CD4-positive, alpha-beta memory T cell (primary cell): ENCODE measurements at regions of chr1 and their contacts with region 1.

Region 1: DNA sequence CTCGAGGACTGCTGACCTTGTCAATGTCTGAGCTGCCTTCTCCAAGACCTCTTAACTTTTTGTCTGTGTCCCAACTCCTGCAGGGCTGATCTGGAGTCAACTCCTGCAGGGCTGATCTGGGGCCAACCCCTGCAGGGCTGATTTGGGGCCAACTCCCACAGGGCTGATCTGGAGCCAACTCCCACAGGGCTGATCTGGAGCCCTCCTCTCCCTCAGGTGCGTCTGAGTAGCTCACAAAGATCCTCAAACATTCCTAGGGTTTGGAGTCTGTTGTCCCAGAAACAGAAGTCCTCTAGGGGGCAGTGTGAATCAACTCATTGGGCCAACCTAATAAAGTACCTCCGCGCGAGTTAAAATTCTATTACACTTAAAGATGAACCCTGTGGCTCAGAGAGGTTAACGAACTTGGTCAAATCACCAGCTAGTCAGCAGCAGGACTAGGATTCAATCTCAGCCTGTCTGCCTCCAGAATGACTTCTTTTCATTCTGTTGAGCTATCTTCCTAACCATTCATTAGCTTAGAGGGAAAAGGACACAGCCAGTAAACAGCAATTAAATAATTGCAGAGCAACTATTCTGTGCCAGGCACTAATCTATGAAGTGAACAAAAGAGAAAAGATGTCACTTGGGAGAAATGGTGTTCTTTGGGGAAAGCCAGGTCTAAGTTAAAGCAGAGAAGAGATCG is 17.2 kb upstream of the RLF start:
- DNase-seq: peak; percentile 60 to 65 (median 65)
- H3K4me3 ChIP-seq: no peak overlapping the region
- H3K4me3 Mint-ChIP-seq: no peak overlapping the region
- H3K27ac ChIP-seq: no peak overlapping the region
- H3K27ac Mint-ChIP-seq: peak overlapping the region in 1 of 7 donors; percentile 12
- H3K4me1 ChIP-seq: no peaks in the 10 kb centered on the region
- H3K4me1 Mint-ChIP-seq: peaks cover 0 to 7% (median 3%) of the 10 kb centered on the region in 4 donors
- H3K27me3 ChIP-seq: no peaks in the 10 kb centered on the region
- H3K27me3 Mint-ChIP-seq: peaks cover 13 to 30% of the 10 kb centered on the region in 2 donors

Region 2: GRCh38 chr1:40067023-40067422 is 77.0 kb before region 1 on chr1:
- CTCF ChIA-PET with region 1: no interaction called
- POLR2A ChIA-PET with region 1: no interaction called
- intact Hi-C with region 1: no loop called
- DNase-seq: no peak
- H3K4me3 ChIP-seq: no peak overlapping the region
- H3K4me3 Mint-ChIP-seq: no peak overlapping the region
- H3K27ac ChIP-seq: no peak overlapping the region
- H3K27ac Mint-ChIP-seq: peak overlapping the region; percentile 10 to 95 (median 84)
- H3K4me1 ChIP-seq: peaks cover 24% of the 10 kb centered on the region
- H3K4me1 Mint-ChIP-seq: peaks cover 32 to 42% (median 36%) of the 10 kb centered on the region in 4 donors
- H3K27me3 ChIP-seq: no peaks in the 10 kb centered on the region
- H3K27me3 Mint-ChIP-seq: no peaks in the 10 kb centered on the region

Region 3: DNA sequence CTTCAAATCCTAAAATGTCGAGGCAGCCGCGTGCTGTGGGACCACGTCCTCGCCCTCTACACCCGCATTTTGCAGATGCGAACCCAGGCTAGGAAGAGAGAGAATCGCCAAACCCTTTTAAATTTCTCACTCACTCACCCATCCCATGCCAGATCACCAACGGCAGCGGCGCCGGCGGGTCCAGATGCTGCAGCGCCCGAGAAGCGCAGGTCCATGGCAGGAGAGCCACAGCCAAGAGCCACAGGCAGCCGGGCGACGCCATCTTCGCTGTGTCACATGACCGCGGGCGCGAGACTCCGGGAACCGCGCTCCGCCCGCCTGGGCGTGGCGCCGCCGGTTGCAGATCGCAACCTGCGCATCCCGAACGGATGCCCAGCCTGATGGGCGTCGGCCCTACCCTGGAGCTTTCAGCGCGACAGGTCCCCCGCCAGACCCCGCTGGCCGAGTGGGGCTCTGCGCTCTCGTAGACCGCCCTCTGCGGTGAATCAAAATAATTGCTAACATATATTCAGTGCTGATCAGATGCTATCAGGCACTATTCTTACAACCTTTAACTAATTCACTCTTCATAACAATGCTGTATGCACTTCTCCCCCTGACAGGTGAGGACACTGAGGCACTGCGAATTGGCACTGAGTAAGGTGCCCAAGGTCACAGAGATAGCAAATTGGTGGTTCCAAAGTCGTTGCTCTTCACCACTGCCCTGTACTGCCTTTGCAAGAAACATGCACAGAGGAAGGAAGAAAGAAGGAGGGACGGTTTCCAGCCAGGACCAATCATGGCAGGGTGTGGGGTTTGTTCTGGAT is 46.9 kb before region 1 on chr1 and contains the start of gene PPT1:
- CTCF ChIA-PET with region 1: interaction called, 3 read pairs
- POLR2A ChIA-PET with region 1: no interaction called
- intact Hi-C with region 1: loop called (anchors 10 kb)
- DNase-seq: peak; percentile 73 to 82 (median 79)
- H3K4me3 ChIP-seq: peak within 1 kb of the TSS; percentile 81 to 91
- H3K4me3 Mint-ChIP-seq: peak within 1 kb of the TSS; percentile 90 to 99 (median 96)
- H3K27ac ChIP-seq: peak within 1 kb of the TSS; percentile 47
- H3K27ac Mint-ChIP-seq: peak within 1 kb of the TSS; percentile 83 to 98 (median 97)
- H3K4me1 ChIP-seq: peaks cover 19% of the 10 kb centered on the region
- H3K4me1 Mint-ChIP-seq: peaks cover 33 to 40% (median 35%) of the 10 kb centered on the region in 4 donors
- H3K27me3 ChIP-seq: no peaks in the 10 kb centered on the region
- H3K27me3 Mint-ChIP-seq: peaks cover 0 to 7% of the 10 kb centered on the region in 2 donors
- total RNA-seq, gene PPT1: 56.7 to 64.8 TPM

Region 4: DNA sequence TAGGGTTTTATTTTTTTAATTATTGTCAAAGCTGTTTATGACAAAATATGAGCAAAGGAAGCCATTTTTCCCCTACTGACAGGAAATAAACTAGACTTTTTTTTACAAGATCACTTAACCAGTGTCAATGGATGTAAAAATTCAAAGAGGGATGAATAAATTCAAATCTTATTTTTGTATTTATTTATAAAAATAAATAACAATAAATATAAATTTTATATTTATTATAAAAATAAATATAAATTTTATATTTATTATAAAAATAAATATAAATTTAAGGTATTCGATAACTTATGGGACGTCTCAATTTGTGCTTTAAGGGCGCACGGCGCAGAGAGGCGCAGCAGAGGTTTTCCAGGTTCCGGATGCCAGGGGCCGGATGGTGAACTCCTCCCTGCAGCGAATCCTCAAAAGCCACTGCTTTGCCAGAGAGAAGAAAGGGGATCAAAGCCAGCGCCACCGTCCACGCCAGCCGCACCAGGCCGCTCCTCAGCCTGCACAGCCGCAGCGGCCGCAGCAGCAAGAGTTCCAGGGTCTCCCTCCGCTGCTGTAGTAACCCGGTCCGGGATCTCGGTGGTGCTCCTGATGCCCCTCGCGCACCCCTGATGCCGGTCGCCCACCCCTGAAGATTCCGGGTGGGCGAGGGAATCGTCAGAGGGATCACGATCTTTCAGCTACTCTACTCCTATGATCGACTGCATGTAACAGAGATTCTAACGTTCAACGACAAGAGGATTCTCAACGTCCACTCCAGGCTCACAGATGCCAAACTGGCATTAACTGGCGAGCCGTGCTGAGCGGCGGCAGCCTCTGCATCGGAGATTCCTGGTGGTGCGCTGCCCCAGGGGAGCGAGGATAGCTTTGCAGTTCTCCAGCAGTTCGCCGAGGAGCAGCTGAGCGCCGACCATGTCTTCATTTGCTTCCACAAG is 11.4 kb before region 1 on chr1:
- CTCF ChIA-PET with region 1: interaction called, 10 read pairs
- POLR2A ChIA-PET with region 1: no interaction called
- intact Hi-C with region 1: no loop called
- DNase-seq: peak in 1 of 5 donors; percentile 7
- H3K4me3 ChIP-seq: no peak overlapping the region
- H3K4me3 Mint-ChIP-seq: no peak overlapping the region
- H3K27ac ChIP-seq: no peak overlapping the region
- H3K27ac Mint-ChIP-seq: no peak overlapping the region
- H3K4me1 ChIP-seq: no peaks in the 10 kb centered on the region
- H3K4me1 Mint-ChIP-seq: no peaks in the 10 kb centered on the region
- H3K27me3 ChIP-seq: no peaks in the 10 kb centered on the region
- H3K27me3 Mint-ChIP-seq: peaks cover 7 to 10% of the 10 kb centered on the region in 2 donors

Region 5: GRCh38 chr1:40411294-40411693 is 267.3 kb after region 1 on chr1:
- CTCF ChIA-PET with region 1: interaction called, 11 read pairs
- POLR2A ChIA-PET with region 1: no interaction called
- intact Hi-C with region 1: no loop called
- DNase-seq: no peak
- H3K4me3 ChIP-seq: no peak overlapping the region
- H3K4me3 Mint-ChIP-seq: no peak overlapping the region
- H3K27ac ChIP-seq: no peak overlapping the region
- H3K27ac Mint-ChIP-seq: peak overlapping the region in 2 of 7 donors; percentile 46
- H3K4me1 ChIP-seq: no peaks in the 10 kb centered on the region
- H3K4me1 Mint-ChIP-seq: peaks cover 13 to 48% (median 27%) of the 10 kb centered on the region in 4 donors
- H3K27me3 ChIP-seq: no peaks in the 10 kb centered on the region
- H3K27me3 Mint-ChIP-seq: no peaks in the 10 kb centered on the region

Region 6: GRCh38 chr1:40438391-40439015 is 294.5 kb after region 1 on chr1:
- CTCF ChIA-PET with region 1: interaction called, 49 read pairs
- POLR2A ChIA-PET with region 1: no interaction called
- intact Hi-C with region 1: loop called (anchors 1 kb)
- DNase-seq: peak in 4 of 5 donors; percentile 19 to 44 (median 28)
- H3K4me3 ChIP-seq: no peak overlapping the region
- H3K4me3 Mint-ChIP-seq: no peak overlapping the region
- H3K27ac ChIP-seq: no peak overlapping the region
- H3K27ac Mint-ChIP-seq: no peak overlapping the region
- H3K4me1 ChIP-seq: no peaks in the 10 kb centered on the region
- H3K4me1 Mint-ChIP-seq: peaks cover 0 to 3% (median under 1%) of the 10 kb centered on the region in 4 donors
- H3K27me3 ChIP-seq: no peaks in the 10 kb centered on the region
- H3K27me3 Mint-ChIP-seq: no peaks in the 10 kb centered on the region

Region 7: GRCh38 chr1:40612345-40612831 is 468.4 kb after region 1 on chr1:
- CTCF ChIA-PET with region 1: no interaction called
- POLR2A ChIA-PET with region 1: no interaction called
- intact Hi-C with region 1: loop called (anchors 2 kb)
- DNase-seq: peak; percentile 62 to 69 (median 65)
- H3K4me3 ChIP-seq: no peak overlapping the region
- H3K4me3 Mint-ChIP-seq: no peak overlapping the region
- H3K27ac ChIP-seq: no peak overlapping the region
- H3K27ac Mint-ChIP-seq: no peak overlapping the region
- H3K4me1 ChIP-seq: no peaks in the 10 kb centered on the region
- H3K4me1 Mint-ChIP-seq: no peaks in the 10 kb centered on the region
- H3K27me3 ChIP-seq: no peaks in the 10 kb centered on the region
- H3K27me3 Mint-ChIP-seq: peaks cover 2% of the 10 kb centered on the region in 2 donors

Region 8: DNA sequence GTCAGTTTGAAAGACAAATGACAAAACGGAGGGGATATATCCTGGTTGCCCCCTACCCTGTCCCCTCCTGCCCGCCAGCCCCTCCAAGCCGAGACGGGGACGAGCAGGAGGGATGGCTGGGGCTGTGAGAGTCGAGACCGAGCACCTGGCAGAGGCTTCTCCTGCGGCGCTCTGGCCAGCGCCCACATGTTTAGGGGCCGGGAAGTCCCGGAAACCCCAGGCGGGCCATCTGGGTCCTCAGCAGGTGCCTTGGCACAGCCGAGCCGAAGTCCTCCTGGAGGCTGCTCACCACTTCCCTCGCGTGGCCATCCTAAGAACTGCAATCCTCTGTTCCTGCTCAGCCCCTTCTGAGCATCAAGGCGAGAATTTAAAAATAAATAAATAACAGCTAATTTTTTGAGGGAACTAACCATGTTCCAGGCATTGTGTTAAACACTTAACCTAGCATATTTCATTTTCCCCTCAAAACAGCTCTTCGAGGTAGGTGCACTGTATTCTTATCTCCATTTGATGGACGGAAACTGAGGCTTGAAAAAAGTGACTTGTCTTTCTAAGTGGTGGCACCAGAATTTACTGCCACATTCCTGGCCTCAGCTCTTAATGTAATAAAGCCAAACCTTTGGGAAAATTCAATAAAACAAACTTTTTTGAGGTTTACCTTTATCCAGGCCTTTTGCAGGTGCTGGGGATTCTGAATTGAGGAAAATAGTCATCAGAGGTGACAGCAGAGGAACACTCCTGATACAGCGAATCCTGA is 524.9 kb after region 1 on chr1:
- CTCF ChIA-PET with region 1: interaction called, 7 read pairs
- POLR2A ChIA-PET with region 1: no interaction called
- intact Hi-C with region 1: loop called (anchors 2 kb)
- DNase-seq: peak; percentile 73 to 78 (median 76)
- H3K4me3 ChIP-seq: peak overlapping the region in 1 of 2 donors; percentile 38
- H3K4me3 Mint-ChIP-seq: peak overlapping the region in 6 of 8 donors; percentile 10 to 78 (median 53)
- H3K27ac ChIP-seq: no peak overlapping the region
- H3K27ac Mint-ChIP-seq: no peak overlapping the region
- H3K4me1 ChIP-seq: peaks cover 21% of the 10 kb centered on the region
- H3K4me1 Mint-ChIP-seq: peaks cover 4 to 28% (median 13%) of the 10 kb centered on the region in 4 donors
- H3K27me3 ChIP-seq: no peaks in the 10 kb centered on the region
- H3K27me3 Mint-ChIP-seq: no peaks in the 10 kb centered on the region